ENCODE measurements at regions of chr9 and their contacts with region 1.

Region 1: GRCh38 chr9:31119882-31120454 is 1264.5 kb upstream of the ACO1 start:
- DNase-seq: no peak
- ATAC-seq: peak; percentile 63 to 70

Region 2: GRCh38 chr9:30978000-30978399 is 142.0 kb before region 1 on chr9:
- intact Hi-C with region 1: no loop called
- DNase-seq: no peak
- ATAC-seq: no peak

Region 3: DNA sequence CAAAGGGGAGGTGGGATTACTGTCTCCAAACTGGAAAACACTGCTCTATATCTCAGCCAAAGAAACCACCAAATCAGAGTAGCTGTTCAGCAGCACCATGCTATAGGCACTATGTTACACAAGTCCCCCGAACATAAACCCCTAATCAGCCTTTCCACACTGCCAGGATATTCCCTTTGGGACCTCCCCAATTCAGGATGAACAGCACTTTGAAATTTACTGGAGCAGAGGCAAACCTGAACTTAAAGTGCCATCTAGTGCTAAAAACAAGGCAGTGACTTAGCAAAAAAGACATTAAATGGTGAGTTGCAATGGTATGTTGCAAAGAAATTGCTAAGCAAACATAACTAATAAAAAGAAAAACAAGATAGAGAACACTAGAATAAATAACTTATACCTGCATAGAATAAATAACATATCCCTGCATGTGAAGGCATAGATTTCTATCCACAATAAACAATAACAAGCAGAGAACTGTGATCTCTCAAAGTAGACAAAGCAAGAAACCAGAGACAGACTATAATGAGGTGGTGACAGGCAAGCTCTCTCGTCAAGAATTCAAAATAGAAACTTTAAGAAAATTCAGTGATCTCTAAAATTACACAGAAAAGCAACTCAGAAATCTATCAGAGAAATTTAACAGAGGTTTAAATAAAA is 680.1 kb after region 1 on chr9:
- intact Hi-C with region 1: loop called (anchors 5 to 10 kb)
- DNase-seq: no peak
- ATAC-seq: no peak

Region 4: GRCh38 chr9:32251539-32251938 is 1131.6 kb after region 1 on chr9:
- intact Hi-C with region 1: loop called in 1 of 2 experiments (anchors 10 kb)
- DNase-seq: peak; percentile 25
- ATAC-seq: peak; percentile 70 to 86